Esophagus squamous epithelium (tissue), 5 donors: ENCODE measurements at regions of chr3 and their contacts with region 1.

Region 1: DNA sequence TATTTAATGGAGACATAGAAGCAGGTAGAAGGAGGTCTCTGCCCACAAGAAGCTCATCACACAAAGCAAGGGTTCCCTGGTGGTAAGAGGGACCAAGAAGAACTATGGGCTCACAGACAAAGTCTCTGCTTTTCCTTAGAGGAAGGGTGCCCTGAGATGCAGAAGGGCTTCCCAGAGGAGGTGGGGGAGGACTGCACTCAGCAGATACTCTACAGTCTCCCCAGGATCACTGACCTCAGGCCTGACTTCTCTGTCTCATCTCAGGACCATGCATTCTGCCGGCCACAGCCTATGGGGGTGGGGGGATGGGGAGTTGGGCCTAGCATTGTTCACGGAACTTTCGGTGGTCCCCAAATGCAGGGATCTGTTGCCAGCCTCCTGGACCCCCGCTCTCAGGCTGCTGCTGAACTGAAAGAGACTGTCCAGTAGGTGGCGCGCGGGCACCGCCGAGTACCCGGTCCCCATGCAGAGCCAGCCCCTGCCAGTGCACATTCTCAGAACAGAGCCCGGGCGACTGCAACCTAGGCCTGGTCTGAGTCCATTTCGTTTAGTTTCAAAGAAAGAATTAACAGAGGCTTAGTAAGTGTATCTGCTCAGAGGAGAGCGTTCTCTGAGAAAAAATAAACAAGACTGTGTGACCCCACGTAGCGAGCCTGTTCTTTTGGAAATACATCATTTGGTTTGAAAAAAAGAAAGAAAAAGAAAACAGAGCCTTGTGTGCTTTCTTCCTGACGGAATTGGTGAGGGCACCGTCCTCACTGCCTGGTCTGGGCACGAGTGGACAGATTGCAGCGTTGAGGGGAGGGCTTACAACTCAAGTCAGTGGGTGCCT is 74.1 kb downstream of the LRTM1 start:
- DNase-seq: no peak
- H3K4me3 ChIP-seq: no peak overlapping the region
- H3K27ac ChIP-seq: peak overlapping the region in 1 of 4 donors; percentile 5
- H3K4me1 ChIP-seq: peaks cover 0 to 44% (median 7%) of the 10 kb centered on the region in 3 donors
- H3K27me3 ChIP-seq: no peaks in the 10 kb centered on the region
- CTCF ChIP-seq: peak; percentile 16 to 87 (median 84)
- POLR2A ChIP-seq: no peak

Region 2: DNA sequence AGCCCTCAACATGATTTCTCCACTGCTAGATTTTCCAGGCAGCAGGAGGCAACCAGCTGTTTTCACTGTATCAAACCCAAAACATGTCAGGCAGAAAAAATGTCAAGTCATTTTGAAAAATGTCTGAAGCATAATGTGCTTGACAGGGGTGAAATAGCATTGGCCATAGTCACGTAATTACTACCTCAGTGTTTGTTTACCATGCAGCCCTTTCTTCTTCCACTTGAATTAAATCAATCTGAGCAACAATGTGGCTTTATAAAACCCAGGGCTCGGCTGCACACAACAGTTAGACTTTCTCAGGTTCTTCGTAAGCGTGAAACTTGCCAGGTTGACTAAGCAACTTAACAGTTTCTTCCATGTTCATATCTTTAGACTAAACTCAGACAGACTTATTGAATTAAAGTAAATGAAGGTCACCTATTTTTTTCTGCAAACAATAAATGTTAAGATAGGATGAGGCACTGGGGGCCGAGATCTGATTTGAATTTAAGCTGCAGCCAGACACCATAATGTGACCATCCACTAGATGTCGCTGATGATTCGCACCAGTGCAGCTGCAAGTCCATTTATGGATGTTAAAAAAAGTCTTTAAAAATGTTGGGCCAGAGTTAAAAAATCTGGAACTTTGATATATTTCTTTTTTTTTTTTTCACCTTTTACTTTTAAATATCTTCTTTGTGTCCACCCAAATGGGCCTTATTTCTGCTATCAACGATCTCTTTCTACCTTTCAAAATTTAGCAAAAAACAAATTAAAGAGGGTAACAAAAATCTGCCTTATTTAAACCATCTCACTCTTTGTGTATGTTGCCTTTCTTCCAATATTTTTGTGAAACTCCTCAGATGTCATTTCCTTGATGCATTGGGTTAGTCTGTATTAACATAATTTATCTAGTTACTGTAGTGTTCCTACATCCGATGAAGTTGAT is 425.6 kb before region 1 on chr3:
- intact Hi-C with region 1: loop called (anchors 10 kb)
- DNase-seq: no peak
- H3K4me3 ChIP-seq: no peak overlapping the region
- H3K27ac ChIP-seq: peak overlapping the region in 1 of 4 donors; percentile 10
- H3K4me1 ChIP-seq: peaks cover 0 to 30% (median 0%) of the 10 kb centered on the region in 3 donors
- H3K27me3 ChIP-seq: no peaks in the 10 kb centered on the region
- CTCF ChIP-seq: peak; percentile 43 to 88 (median 81)
- POLR2A ChIP-seq: no peak

Region 3: DNA sequence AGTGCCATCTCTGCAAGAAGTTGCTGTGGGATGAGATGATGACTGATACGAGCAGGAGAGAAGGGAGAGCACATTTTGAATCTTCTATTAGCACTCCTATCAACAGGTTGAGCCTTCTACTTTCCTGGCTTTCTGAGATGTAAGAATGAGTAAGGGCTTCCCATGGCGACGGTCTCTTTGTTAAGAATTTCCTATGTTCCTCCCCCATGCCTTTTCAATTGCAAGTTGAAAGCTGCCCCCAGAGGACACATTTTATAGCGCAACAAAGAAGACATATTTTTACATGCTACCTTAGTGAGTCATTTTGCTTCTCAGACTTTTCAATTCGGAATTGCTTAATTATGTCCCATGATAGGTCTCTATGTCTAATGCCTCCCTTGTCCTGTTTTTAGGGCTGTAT is 145.4 kb after region 1 on chr3:
- intact Hi-C with region 1: no loop called
- DNase-seq: no peak
- H3K4me3 ChIP-seq: no peak overlapping the region
- H3K27ac ChIP-seq: no peak overlapping the region
- H3K4me1 ChIP-seq: peaks cover 0 to 18% (median 5%) of the 10 kb centered on the region in 3 donors
- H3K27me3 ChIP-seq: no peaks in the 10 kb centered on the region
- CTCF ChIP-seq: peak in 2 of 6 experiments; percentile 10 to 45
- POLR2A ChIP-seq: no peak

Region 4: GRCh38 chr3:55030938-55031337 is 177.1 kb after region 1 on chr3:
- intact Hi-C with region 1: no loop called
- DNase-seq: no peak
- H3K4me3 ChIP-seq: no peak overlapping the region
- H3K27ac ChIP-seq: no peak overlapping the region
- H3K4me1 ChIP-seq: no peaks in the 10 kb centered on the region
- H3K27me3 ChIP-seq: no peaks in the 10 kb centered on the region
- CTCF ChIP-seq: no peak
- POLR2A ChIP-seq: no peak

Region 5: DNA sequence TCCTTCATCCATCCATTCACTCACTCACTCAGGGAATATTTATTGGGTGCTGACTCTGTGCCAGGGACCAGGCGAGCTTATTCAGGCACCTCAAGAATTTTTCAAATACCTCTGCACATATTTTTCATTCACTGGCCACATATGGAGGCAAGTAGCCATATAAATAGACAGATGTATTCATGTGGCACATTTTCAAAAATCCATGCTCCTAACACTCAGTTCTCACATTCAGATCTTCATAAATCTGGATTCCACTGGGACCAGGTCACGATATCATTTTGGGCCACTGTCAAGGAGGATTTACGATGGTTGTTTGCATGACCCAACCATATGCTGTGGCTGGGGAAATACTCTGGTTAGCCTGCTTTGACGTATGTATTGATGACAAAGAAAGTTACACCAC is 315.8 kb after region 1 on chr3:
- intact Hi-C with region 1: no loop called
- DNase-seq: no peak
- H3K4me3 ChIP-seq: no peak overlapping the region
- H3K27ac ChIP-seq: no peak overlapping the region
- H3K4me1 ChIP-seq: peaks cover 0 to 19% (median 2%) of the 10 kb centered on the region in 3 donors
- H3K27me3 ChIP-seq: no peaks in the 10 kb centered on the region
- CTCF ChIP-seq: no peak
- POLR2A ChIP-seq: no peak

Region 6: DNA sequence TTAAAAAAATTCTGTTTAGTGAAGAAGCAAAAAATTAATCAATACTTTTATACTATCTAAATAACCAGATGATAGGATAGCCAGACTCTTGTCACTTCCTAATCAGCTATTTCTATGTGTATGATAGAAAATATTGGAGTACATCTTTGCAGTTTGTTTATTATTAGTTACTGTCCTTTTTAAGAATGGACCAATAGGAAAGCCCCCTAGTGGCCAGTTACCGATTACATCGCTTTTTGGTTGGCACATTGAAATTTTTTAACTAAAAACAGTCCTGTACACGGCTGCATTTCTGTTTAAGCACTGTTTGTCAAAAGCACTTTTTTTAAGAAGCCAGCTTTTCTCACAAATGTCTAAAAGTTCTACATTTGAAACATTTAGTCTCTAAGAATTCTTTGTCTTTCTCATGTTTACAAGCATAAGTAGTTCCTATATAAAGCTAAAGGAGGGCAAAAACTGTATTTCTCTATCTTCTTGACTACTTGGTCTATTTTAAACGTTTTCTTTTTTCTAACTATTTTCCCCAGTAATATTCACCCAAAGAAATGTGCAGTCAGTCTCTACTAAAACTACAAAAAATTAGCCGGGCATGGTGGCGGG is 327.2 kb after region 1 on chr3:
- intact Hi-C with region 1: loop called (anchors 5 kb)
- DNase-seq: no peak
- H3K4me3 ChIP-seq: no peak overlapping the region
- H3K27ac ChIP-seq: no peak overlapping the region
- H3K4me1 ChIP-seq: peaks cover 0 to 4% (median 0%) of the 10 kb centered on the region in 3 donors
- H3K27me3 ChIP-seq: no peaks in the 10 kb centered on the region
- CTCF ChIP-seq: peak; percentile 44 to 72 (median 56)
- POLR2A ChIP-seq: no peak